Activated CD4-positive, alpha-beta T cell treated with anti-CD3 and anti-CD28 coated beads for 36 hours (primary cell): ENCODE measurements at regions of chr2 and their contacts with region 1.

Region 1: GRCh38 chr2:203740780-203741281 is 34.4 kb downstream of the CD28 start:
- DNase-seq: peak; percentile 52
- ATAC-seq: peak; percentile 70
- H3K4me3 Mint-ChIP-seq: peak overlapping the region; percentile 62
- H3K27ac Mint-ChIP-seq: peak overlapping the region; percentile 99
- H3K4me1 Mint-ChIP-seq: peaks cover 92% of the 10 kb centered on the region
- H3K27me3 Mint-ChIP-seq: no peaks in the 10 kb centered on the region

Region 2: GRCh38 chr2:203718087-203718486 is 22.7 kb before region 1 on chr2:
- CTCF ChIA-PET with region 1: interaction called, 18 read pairs
- POLR2A ChIA-PET with region 1: interaction called, 77 read pairs
- intact Hi-C with region 1: no loop called
- DNase-seq: peak; percentile 77
- ATAC-seq: peak; percentile 63
- H3K4me3 Mint-ChIP-seq: peak overlapping the region; percentile 63
- H3K27ac Mint-ChIP-seq: peak overlapping the region; percentile 95
- H3K4me1 Mint-ChIP-seq: peaks cover 97% of the 10 kb centered on the region
- H3K27me3 Mint-ChIP-seq: no peaks in the 10 kb centered on the region

Region 3: DNA sequence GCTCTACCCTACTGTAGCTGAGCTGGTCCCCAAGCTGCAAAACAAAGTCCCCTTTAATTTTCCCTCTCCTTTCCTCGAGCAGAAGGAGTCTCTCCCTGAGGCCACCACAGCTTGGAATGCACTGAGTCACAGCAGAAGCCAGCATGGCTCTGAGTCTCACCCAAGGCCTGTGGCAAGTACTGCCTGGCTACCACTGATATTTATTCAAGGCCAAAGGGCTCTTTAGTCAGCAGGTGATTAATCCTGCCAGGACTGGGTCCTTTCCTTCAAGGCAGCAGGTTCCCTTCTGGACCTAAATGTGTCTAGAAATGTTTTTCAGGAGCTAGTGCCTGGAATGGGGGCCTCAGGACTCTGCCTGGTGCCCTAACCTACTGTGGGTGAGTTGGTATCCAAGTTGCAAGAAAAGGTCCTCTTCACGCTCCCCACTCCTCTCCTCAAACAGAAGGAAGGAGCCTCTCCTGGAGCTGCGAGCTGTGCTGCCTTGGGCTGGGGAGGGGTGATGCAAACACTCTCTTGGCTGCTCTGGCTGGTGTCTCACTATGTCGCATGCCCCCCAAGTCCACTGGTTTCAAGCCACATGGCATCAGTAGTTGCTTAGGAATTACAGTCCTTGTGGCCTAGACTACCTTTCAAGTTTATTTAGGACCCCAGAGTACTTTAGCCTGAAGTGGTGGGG is 19.0 kb after region 1 on chr2:
- CTCF ChIA-PET with region 1: interaction called, 25 read pairs
- POLR2A ChIA-PET with region 1: interaction called, 25 read pairs
- intact Hi-C with region 1: loop called (anchors 1 kb)
- DNase-seq: no peak
- ATAC-seq: no peak
- H3K4me3 Mint-ChIP-seq: no peak overlapping the region
- H3K27ac Mint-ChIP-seq: no peak overlapping the region
- H3K4me1 Mint-ChIP-seq: peaks cover 61% of the 10 kb centered on the region
- H3K27me3 Mint-ChIP-seq: no peaks in the 10 kb centered on the region

Region 4: GRCh38 chr2:203820969-203821368 is 80.1 kb after region 1 on chr2:
- CTCF ChIA-PET with region 1: no interaction called
- POLR2A ChIA-PET with region 1: no interaction called
- intact Hi-C with region 1: no loop called
- DNase-seq: no peak
- ATAC-seq: no peak
- H3K4me3 Mint-ChIP-seq: no peak overlapping the region
- H3K27ac Mint-ChIP-seq: no peak overlapping the region
- H3K4me1 Mint-ChIP-seq: peaks cover 34% of the 10 kb centered on the region
- H3K27me3 Mint-ChIP-seq: no peaks in the 10 kb centered on the region

Region 5: DNA sequence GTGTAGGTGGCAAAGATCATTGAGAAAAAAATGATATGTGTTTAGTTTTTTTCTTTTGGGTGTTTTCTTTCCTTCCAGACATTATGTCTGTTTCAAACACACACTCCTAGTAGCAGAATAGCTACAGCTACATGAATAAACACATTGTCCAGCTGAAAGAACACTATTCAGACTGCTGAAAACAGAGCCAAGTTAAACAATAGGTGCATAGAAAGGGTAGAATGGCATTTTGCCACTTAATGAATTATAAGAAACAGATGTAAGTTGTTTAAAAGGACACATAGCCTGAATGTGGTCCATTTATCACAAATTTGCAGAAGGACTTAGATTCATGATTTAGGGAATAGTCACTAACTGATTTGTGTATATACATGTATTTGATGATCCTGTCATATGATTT is 146.8 kb after region 1 on chr2:
- CTCF ChIA-PET with region 1: interaction called, 4 read pairs
- POLR2A ChIA-PET with region 1: interaction called, 6 read pairs
- intact Hi-C with region 1: loop called in 1 of 2 experiments (anchors 1 kb)
- DNase-seq: no peak
- ATAC-seq: no peak
- H3K4me3 Mint-ChIP-seq: no peak overlapping the region
- H3K27ac Mint-ChIP-seq: peak overlapping the region; percentile 68
- H3K4me1 Mint-ChIP-seq: peaks cover 67% of the 10 kb centered on the region
- H3K27me3 Mint-ChIP-seq: peaks cover 4% of the 10 kb centered on the region

Region 6: GRCh38 chr2:203949228-203949627 is 208.4 kb after region 1 on chr2:
- CTCF ChIA-PET with region 1: interaction called, 4 read pairs
- POLR2A ChIA-PET with region 1: interaction called, 14 read pairs
- intact Hi-C with region 1: no loop called
- DNase-seq: no peak
- ATAC-seq: peak; percentile 59
- H3K4me3 Mint-ChIP-seq: peak overlapping the region; percentile 73
- H3K27ac Mint-ChIP-seq: peak overlapping the region; percentile 91
- H3K4me1 Mint-ChIP-seq: peaks cover 91% of the 10 kb centered on the region
- H3K27me3 Mint-ChIP-seq: no peaks in the 10 kb centered on the region